ENCODE measurements at regions of chr22 and their contacts with region 1.

Region 1: DNA sequence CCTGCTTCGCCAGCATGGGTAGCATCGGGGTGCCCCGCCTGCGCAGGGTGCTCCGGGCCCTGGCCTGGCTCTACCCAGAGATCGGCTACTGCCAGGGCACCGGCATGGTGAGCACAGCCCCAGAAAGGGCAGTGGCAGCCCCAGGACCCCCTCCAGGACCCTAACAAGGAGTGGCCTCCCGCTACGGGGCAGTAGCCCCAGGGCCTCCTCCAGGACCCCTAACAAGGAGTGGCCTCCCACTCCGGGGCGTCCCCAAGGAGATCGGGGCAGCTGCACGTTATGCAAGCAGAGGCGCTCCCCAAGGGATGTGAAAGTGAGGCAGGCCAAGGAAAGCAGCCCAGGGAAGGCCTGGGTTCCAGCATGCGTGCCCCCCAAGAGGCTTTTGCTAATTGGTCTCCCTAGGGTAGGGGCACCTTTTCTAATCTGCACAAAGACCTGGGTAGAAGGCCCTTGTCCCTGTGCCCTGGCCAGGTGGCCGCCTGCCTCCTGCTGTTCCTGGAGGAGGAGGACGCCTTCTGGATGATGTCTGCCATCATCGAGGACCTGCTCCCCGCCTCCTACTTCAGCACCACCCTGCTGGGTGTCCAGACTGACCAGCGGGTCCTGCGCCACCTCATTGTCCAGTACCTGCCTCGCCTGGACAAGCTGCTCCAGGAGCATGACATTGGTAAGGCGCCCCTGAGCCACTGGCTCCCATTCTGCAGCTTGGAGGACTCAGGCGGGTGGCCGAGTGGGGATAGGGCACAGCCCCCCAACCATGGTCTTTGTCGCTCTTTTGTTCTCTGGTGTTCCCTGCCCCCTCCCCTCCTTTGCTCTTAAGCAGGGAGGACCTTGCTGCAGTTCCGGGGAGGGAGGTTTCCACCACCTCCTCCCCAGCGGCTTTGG is 35.0 kb downstream of the SGSM3 start:
- DNase-seq: no peak
- ATAC-seq: no peak
- H3K4me3 Mint-ChIP-seq: no peak overlapping the region
- H3K27ac Mint-ChIP-seq: no peak overlapping the region
- H3K4me1 Mint-ChIP-seq: peaks cover 35% of the 10 kb centered on the region
- H3K27me3 Mint-ChIP-seq: no peaks in the 10 kb centered on the region
- CTCF ChIP-seq: no peak

Region 2: GRCh38 chr22:40418366-40419201 is 13.2 kb after region 1 on chr22:
- CTCF ChIA-PET with region 1: interaction called, 3 read pairs
- POLR2A ChIA-PET with region 1: interaction called, 21 read pairs
- intact Hi-C with region 1: no loop called
- DNase-seq: peak; percentile 69
- ATAC-seq: peak; percentile 80
- H3K4me3 Mint-ChIP-seq: no peak overlapping the region
- H3K27ac Mint-ChIP-seq: no peak overlapping the region
- H3K4me1 Mint-ChIP-seq: peaks cover 34% of the 10 kb centered on the region
- H3K27me3 Mint-ChIP-seq: no peaks in the 10 kb centered on the region
- CTCF ChIP-seq: no peak

Measured in activated CD8-positive, alpha-beta T cell treated with anti-CD3 and anti-CD28 coated beads for 36 hours (primary cell).